PC-9 (cell line): ENCODE measurements at regions of chr2 and their contacts with region 1.

Region 1: DNA sequence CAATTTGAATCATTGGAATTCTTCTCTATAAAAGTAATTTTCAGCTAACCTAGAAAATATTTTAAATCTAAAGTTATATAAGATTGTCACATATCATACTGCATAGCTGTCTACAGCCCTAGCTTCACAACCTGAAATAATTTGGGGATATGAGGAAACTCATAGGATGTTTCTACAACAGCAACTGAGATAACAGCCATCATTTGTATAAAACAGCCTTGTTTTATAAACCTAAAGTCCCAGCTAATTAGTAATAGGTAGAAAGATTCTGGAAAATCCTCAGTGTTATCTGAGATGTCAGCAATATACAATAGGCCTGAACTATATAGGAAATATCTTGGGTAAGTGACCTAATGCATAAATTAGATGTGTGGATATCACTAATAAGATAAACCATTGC is 47.6 kb upstream of the TSPYL6 start:
- DNase-seq: no peak
- H3K4me3 ChIP-seq: no peak overlapping the region
- H3K27ac ChIP-seq: no peak overlapping the region
- H3K4me1 ChIP-seq: no peaks in the 10 kb centered on the region
- H3K27me3 ChIP-seq: no peaks in the 10 kb centered on the region
- CTCF ChIP-seq: no peak

Region 2: DNA sequence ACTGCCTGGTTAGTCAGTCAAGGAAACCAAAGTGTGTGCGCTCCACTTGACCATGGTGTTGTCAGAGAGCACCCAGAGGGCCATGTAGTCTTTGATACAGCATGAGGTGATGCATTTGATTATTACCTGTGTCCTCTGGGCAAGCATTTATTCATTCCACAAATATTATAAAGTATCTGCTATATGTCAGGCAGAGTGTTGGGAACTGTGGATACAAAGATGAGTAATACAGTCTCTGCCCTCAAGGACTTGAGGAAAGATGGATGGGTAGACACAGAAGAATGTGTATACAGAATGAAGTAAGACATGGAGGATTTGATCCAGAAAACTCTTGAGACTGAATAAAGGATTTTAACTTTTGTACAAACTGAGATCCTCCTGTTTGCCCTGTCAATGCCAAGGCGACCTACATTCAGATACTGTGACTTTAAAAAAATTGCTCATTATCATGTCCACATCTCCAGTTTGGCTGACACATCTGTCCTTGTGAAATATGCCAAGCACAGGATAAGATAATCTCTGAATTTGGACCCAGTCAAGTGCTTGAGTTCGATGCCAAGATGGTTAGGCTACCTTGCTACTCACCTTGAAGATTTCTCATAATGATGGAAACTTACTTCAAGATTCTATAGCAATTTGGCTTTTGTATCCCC is 137.4 kb before region 1 on chr2:
- CTCF ChIA-PET with region 1: no interaction called
- POLR2A ChIA-PET with region 1: interaction called, 11 read pairs
- intact Hi-C with region 1: no loop called
- DNase-seq: no peak
- H3K4me3 ChIP-seq: no peak overlapping the region
- H3K27ac ChIP-seq: no peak overlapping the region
- H3K4me1 ChIP-seq: no peaks in the 10 kb centered on the region
- H3K27me3 ChIP-seq: no peaks in the 10 kb centered on the region
- CTCF ChIP-seq: no peak

Region 3: GRCh38 chr2:54341656-54342055 is 38.0 kb after region 1 on chr2:
- CTCF ChIA-PET with region 1: no interaction called
- POLR2A ChIA-PET with region 1: no interaction called
- intact Hi-C with region 1: no loop called
- DNase-seq: no peak
- H3K4me3 ChIP-seq: no peak overlapping the region
- H3K27ac ChIP-seq: no peak overlapping the region
- H3K4me1 ChIP-seq: no peaks in the 10 kb centered on the region
- H3K27me3 ChIP-seq: no peaks in the 10 kb centered on the region
- CTCF ChIP-seq: no peak